ENCODE measurements at regions of chr17 and their contacts with region 1.

Region 1: DNA sequence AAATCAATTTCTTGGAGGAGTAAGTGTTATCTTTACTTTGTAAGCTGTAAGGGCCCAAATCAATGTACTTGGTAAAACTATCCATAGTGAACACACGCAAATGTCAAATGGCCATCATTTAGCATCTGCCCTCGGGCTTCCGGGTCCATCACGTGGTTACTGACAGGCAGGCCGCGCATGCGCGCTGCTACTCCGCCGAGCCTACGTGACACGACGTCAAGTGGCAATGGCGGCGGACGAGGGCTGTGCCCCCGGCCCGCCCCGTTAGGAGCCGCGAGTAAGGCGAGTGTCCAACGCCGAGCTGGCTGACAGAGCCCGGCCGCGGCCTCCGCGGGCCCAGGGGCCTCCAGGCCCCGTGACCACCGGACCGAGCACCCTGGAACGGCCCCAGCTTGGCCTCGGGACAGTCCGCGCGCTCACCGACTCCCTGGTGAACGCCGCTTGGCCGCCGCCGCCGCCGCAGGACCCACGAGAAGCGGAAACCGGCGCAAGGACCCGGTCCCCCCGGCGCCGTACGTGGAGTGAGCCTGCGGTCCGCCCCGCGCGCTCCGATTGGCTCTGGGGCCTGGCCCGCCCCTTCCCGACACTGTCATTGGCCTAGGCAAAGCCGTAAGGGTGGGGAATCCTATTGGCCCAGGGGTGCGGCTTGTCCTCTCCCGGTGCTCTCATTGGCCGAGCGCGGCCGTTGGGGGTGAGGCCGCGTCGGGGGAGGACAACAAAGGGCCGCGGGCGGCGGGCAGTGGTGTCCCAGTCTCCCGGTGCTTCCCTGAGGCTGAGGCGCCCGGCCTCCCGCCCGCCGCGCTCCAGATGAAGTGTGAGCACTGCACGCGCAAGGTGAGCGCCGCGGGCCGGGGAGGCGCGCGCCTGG is at the start of gene NARF:
- DNase-seq: peak; percentile 89 to 98 (median 95)
- ATAC-seq: peak; percentile 97
- H3K4me3 ChIP-seq: peak within 1 kb of the TSS; percentile 67 to 76
- H3K4me3 Mint-ChIP-seq: peak within 1 kb of the TSS; percentile 87
- H3K27ac ChIP-seq: peak within 1 kb of the TSS; percentile 96 to 97
- H3K27ac Mint-ChIP-seq: peak within 1 kb of the TSS; percentile 97
- H3K4me1 ChIP-seq: peaks cover 17% of the 10 kb centered on the region
- H3K4me1 Mint-ChIP-seq: peaks cover 29% of the 10 kb centered on the region
- H3K27me3 ChIP-seq: no peaks in the 10 kb centered on the region
- H3K27me3 Mint-ChIP-seq: no peaks in the 10 kb centered on the region
- CTCF ChIP-seq: no peak
- total RNA-seq, gene NARF: 60.0 to 60.1 TPM

Region 2: GRCh38 chr17:82292251-82293154 is 165.7 kb before region 1 on chr17:
- CTCF ChIA-PET with region 1: no interaction called
- POLR2A ChIA-PET with region 1: interaction called, 3 read pairs
- intact Hi-C with region 1: loop called (anchors 2 to 5 kb)
- DNase-seq: peak; percentile 85 to 98 (median 90)
- ATAC-seq: peak; percentile 85
- H3K4me3 ChIP-seq: peak overlapping the region; percentile 65 to 78
- H3K4me3 Mint-ChIP-seq: peak overlapping the region; percentile 88
- H3K27ac ChIP-seq: peak overlapping the region; percentile 88 to 96
- H3K27ac Mint-ChIP-seq: peak overlapping the region; percentile 94
- H3K4me1 ChIP-seq: peaks cover 26% of the 10 kb centered on the region
- H3K4me1 Mint-ChIP-seq: peaks cover 40% of the 10 kb centered on the region
- H3K27me3 ChIP-seq: no peaks in the 10 kb centered on the region
- H3K27me3 Mint-ChIP-seq: no peaks in the 10 kb centered on the region
- CTCF ChIP-seq: no peak

Region 3: DNA sequence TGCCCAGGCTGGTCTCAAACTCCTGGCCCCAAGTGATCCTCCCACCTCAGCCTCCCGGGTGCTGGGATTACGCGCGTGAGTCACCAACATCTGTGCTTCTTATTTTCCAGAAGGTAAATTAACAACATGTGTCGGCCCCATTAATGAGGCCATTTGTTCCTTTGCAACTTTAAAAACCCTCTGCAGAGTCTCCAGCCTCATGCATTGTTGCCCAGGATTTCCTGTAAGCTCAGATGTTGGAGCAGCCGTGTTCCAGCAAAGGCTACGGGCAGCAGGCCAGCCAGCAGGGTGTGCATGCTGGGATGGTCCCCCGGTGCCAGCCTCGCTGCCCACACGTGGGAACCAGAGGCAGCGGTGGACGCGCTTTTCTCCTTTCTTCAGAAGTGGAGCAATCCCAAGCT is 59.2 kb before region 1 on chr17:
- CTCF ChIA-PET with region 1: no interaction called
- POLR2A ChIA-PET with region 1: no interaction called
- intact Hi-C with region 1: no loop called
- DNase-seq: no peak
- ATAC-seq: no peak
- H3K4me3 ChIP-seq: no peak overlapping the region
- H3K4me3 Mint-ChIP-seq: no peak overlapping the region
- H3K27ac ChIP-seq: no peak overlapping the region
- H3K27ac Mint-ChIP-seq: no peak overlapping the region
- H3K4me1 ChIP-seq: peaks cover 15% of the 10 kb centered on the region
- H3K4me1 Mint-ChIP-seq: peaks cover 9% of the 10 kb centered on the region
- H3K27me3 ChIP-seq: no peaks in the 10 kb centered on the region
- H3K27me3 Mint-ChIP-seq: no peaks in the 10 kb centered on the region
- CTCF ChIP-seq: no peak

Region 4: GRCh38 chr17:82518826-82519810 is 60.9 kb after region 1 on chr17 and contains the start of gene FOXK2:
- CTCF ChIA-PET with region 1: no interaction called
- POLR2A ChIA-PET with region 1: interaction called, 5 read pairs
- intact Hi-C with region 1: loop called (anchors 1 to 2 kb)
- DNase-seq: peak; percentile 86 to 98 (median 92)
- ATAC-seq: peak; percentile 98
- H3K4me3 ChIP-seq: peak within 1 kb of the TSS; percentile 56 to 84
- H3K4me3 Mint-ChIP-seq: peak within 1 kb of the TSS; percentile 86
- H3K27ac ChIP-seq: peak within 1 kb of the TSS; percentile 84 to 85
- H3K27ac Mint-ChIP-seq: peak within 1 kb of the TSS; percentile 89
- H3K4me1 ChIP-seq: peaks cover 17% of the 10 kb centered on the region
- H3K4me1 Mint-ChIP-seq: peaks cover 31% of the 10 kb centered on the region
- H3K27me3 ChIP-seq: no peaks in the 10 kb centered on the region
- H3K27me3 Mint-ChIP-seq: no peaks in the 10 kb centered on the region
- CTCF ChIP-seq: no peak
- total RNA-seq, gene FOXK2: 36.1 to 37.7 TPM

Region 5: DNA sequence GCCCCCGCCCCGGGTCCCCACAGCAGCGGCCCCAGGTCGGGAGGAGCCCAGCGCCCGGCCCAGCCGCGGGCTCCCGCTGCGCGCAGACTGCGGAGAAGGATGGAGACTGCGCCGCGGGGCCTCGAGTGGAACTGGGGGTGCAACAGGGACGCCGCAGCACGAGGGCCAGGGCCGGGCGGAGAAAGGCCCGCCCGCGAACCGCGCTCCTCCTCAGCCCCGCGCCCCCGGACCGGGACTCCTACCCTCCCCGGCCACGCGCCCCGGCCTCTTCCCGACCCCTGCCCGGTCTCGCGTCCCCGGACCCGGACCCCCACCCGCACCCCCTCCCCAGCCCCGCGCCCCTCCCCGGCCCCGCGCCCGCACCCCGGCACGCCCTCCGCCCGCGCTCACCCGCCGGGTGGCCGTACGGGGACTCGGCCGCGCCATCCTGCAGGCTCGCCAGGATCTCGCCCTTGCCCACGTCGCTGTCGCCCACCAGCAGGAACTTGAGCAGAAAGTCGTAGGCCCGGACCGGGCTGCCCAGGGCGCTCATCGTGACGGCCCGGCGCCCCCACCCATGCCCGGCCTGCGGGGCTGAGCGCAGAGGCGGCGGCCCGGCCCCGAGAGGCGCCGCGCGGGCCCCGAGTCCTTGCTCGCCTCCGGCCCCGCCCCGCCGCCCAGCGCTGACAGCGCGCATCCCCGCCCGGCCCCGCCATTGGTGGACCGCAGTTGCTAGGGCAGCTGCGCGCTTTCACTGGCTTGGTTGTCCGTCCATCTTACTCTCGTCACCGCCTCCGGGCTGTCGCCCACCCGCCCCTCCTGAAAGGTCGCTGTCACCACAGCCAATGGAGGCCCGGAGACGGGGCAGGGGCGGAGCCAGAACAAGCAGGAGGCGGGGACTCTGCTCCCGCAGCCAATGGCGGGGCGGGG is 240.1 kb after region 1 on chr17 and contains the start of gene RAB40B:
- CTCF ChIA-PET with region 1: no interaction called
- POLR2A ChIA-PET with region 1: no interaction called
- intact Hi-C with region 1: loop called in 1 of 2 experiments (anchors 2 kb)
- DNase-seq: peak; percentile 96 to 99 (median 99)
- ATAC-seq: peak; percentile 96
- H3K4me3 ChIP-seq: peak within 1 kb of the TSS; percentile 49 to 86
- H3K4me3 Mint-ChIP-seq: peak within 1 kb of the TSS; percentile 85
- H3K27ac ChIP-seq: peak within 1 kb of the TSS in 1 of 2 experiments; percentile 33
- H3K27ac Mint-ChIP-seq: peak within 1 kb of the TSS; percentile 62
- H3K4me1 ChIP-seq: peaks cover 17% of the 10 kb centered on the region
- H3K4me1 Mint-ChIP-seq: peaks cover 18% of the 10 kb centered on the region
- H3K27me3 ChIP-seq: peaks cover 0 to 2% of the 10 kb centered on the region in 2 experiments
- H3K27me3 Mint-ChIP-seq: peaks cover 2% of the 10 kb centered on the region
- CTCF ChIP-seq: no peak
- total RNA-seq, gene RAB40B: 1.1 to 1.2 TPM

Region 6: GRCh38 chr17:83051395-83052233 is 593.4 kb after region 1 on chr17:
- CTCF ChIA-PET with region 1: no interaction called
- POLR2A ChIA-PET with region 1: no interaction called
- intact Hi-C with region 1: loop called in 1 of 2 experiments (anchors 5 kb)
- DNase-seq: peak; percentile 95 to 99 (median 99)
- ATAC-seq: peak; percentile 85
- H3K4me3 ChIP-seq: peak overlapping the region; percentile 49 to 68
- H3K4me3 Mint-ChIP-seq: peak overlapping the region; percentile 86
- H3K27ac ChIP-seq: peak overlapping the region; percentile 75 to 87
- H3K27ac Mint-ChIP-seq: peak overlapping the region; percentile 94
- H3K4me1 ChIP-seq: peaks cover 40% of the 10 kb centered on the region
- H3K4me1 Mint-ChIP-seq: peaks cover 40% of the 10 kb centered on the region
- H3K27me3 ChIP-seq: no peaks in the 10 kb centered on the region
- H3K27me3 Mint-ChIP-seq: no peaks in the 10 kb centered on the region
- CTCF ChIP-seq: no peak